Tibial artery (tissue), 4 donors: ENCODE measurements at regions of chr10 and their contacts with region 1.

Region 1: DNA sequence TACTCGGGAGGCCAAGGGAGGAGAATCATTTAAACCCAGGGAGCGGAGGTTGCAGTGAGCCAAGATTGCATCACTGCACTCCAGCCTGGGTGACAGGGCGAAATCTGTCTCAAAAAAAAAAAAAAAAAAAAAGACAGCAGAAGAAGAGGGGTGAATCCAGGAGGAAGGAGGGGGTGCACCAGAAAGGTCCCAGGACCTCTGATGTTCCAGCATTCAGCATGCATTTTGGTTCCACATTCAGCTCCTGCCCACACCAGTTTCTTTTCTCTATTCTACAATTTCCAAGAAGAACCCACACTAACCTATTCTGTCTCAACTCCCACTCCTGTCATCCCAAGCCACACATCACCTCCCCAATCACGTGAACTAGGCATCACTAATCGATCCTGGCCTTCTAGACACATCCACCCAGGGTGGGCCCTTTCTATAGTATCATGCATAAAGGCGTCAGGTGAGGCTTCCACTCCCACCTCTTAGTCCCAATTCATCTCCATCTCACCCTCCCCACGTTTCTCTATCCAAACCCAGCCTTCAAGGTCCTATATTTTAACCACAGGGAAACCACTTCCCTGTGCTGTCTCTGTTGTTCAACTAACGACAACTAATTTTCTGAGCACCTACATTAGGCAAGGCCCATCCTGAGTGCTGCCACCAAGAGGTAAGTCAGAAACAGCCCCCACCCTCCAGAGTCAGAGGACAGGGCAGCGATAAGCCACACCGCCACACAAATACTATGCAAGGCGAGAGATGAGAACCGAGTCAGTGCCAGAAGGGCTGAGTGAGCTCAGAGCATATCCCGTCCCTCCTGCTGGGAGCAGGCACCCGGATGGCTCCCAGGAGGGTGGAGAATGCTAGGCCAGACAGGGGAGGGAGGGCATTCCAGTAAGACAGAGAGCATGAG is 2.2 kb downstream of the ANXA11 start:
- DNase-seq: peak; percentile 75 to 90
- H3K4me3 ChIP-seq: peak overlapping the region; percentile 76 to 96
- H3K27ac ChIP-seq: peak overlapping the region; percentile 94 to 98
- H3K4me1 ChIP-seq: peaks cover 5 to 87% (median 76%) of the 10 kb centered on the region in 4 donors
- H3K27me3 ChIP-seq: no peaks in the 10 kb centered on the region
- CTCF ChIP-seq: no peak

Region 2: GRCh38 chr10:80158598-80159127 is 44.5 kb before region 1 on chr10:
- intact Hi-C with region 1: loop called (anchors 2 kb)
- DNase-seq: peak; percentile 94 to 97
- H3K4me3 ChIP-seq: no peak overlapping the region
- H3K27ac ChIP-seq: peak overlapping the region; percentile 81 to 84
- H3K4me1 ChIP-seq: peaks cover 12 to 68% (median 62%) of the 10 kb centered on the region in 4 donors
- H3K27me3 ChIP-seq: no peaks in the 10 kb centered on the region
- CTCF ChIP-seq: no peak